ENCODE measurements at regions of chrX and their contacts with region 1.

Region 1: DNA sequence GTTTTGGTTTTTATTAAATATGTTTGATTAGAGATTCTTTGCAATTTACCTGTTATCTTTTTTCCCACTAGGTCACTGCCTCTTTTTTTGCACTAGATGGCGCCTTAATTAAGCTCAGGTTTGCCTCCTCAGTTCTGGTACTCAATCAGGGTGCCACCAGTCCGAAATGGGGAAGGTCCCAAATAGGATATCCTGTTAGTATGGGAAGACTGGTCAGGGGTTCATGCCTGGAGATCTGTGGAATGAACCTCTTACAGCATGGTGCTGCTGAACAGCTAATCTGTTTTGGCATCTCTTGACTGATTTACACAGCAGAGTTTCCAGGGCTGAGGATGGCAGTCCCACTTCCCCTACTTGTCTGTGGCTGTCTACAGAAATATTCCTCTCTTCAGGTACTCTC is 24.2 kb upstream of the VSIG1 start:
- DNase-seq: peak; percentile 21
- ATAC-seq: peak; percentile 30
- H3K4me3 Mint-ChIP-seq: peak overlapping the region; percentile 23
- H3K27ac Mint-ChIP-seq: peak overlapping the region; percentile 73
- H3K4me1 Mint-ChIP-seq: peaks cover 77% of the 10 kb centered on the region
- H3K27me3 Mint-ChIP-seq: no peaks in the 10 kb centered on the region

Region 2: GRCh38 chrX:107826238-107827029 is 194.2 kb before region 1 on chrX:
- CTCF ChIA-PET with region 1: no interaction called
- POLR2A ChIA-PET with region 1: no interaction called
- intact Hi-C with region 1: no loop called
- DNase-seq: peak; percentile 56
- ATAC-seq: peak; percentile 43
- H3K4me3 Mint-ChIP-seq: peak overlapping the region; percentile 75
- H3K27ac Mint-ChIP-seq: peak overlapping the region; percentile 78
- H3K4me1 Mint-ChIP-seq: peaks cover 46% of the 10 kb centered on the region
- H3K27me3 Mint-ChIP-seq: peaks cover 4% of the 10 kb centered on the region

Region 3: GRCh38 chrX:108053218-108053617 is 32.6 kb after region 1 on chrX:
- CTCF ChIA-PET with region 1: interaction called, 5 read pairs
- POLR2A ChIA-PET with region 1: no interaction called
- intact Hi-C with region 1: loop called in 1 of 2 experiments (anchors 2 kb)
- DNase-seq: no peak
- ATAC-seq: peak; percentile 84
- H3K4me3 Mint-ChIP-seq: no peak overlapping the region
- H3K27ac Mint-ChIP-seq: no peak overlapping the region
- H3K4me1 Mint-ChIP-seq: peaks cover 6% of the 10 kb centered on the region
- H3K27me3 Mint-ChIP-seq: peaks cover 2% of the 10 kb centered on the region

Region 4: GRCh38 chrX:108177351-108178142 is 156.9 kb after region 1 on chrX:
- CTCF ChIA-PET with region 1: no interaction called
- POLR2A ChIA-PET with region 1: no interaction called
- intact Hi-C with region 1: no loop called
- DNase-seq: no peak
- ATAC-seq: no peak
- H3K4me3 Mint-ChIP-seq: no peak overlapping the region
- H3K27ac Mint-ChIP-seq: no peak overlapping the region
- H3K4me1 Mint-ChIP-seq: no peaks in the 10 kb centered on the region
- H3K27me3 Mint-ChIP-seq: no peaks in the 10 kb centered on the region